Activated naive CD4-positive, alpha-beta T cell treated with anti-CD3 and anti-CD28 coated beads for 36 hours (primary cell): ENCODE measurements at regions of chr1 and their contacts with region 1.

Region 1: GRCh38 chr1:214123061-214123784 is 135.4 kb downstream of the PROX1 start:
- DNase-seq: peak; percentile 61
- H3K4me3 Mint-ChIP-seq: no peak overlapping the region
- H3K27ac Mint-ChIP-seq: no peak overlapping the region
- H3K4me1 Mint-ChIP-seq: peaks cover 6% of the 10 kb centered on the region
- H3K27me3 Mint-ChIP-seq: peaks cover 5% of the 10 kb centered on the region

Region 2: DNA sequence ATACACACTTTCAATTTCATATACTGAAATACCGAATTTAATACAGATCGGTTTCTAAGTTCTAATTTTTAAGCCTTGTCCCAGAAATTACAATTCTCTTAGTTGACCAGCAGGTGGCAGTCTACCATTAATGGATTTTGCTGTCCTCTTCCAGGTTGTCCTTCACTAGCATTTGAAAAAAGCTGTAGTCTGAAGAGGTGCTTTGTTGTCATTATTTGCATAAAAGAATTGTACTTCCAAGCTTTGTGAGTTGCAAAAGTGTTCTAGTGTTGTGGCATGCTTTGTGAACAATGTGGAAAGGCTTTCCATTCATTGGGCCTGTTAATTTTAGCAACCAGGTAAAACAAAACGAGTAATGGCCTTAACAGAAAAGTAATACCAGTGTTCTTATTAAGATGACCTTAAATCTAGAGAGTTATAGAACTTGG is 878.5 kb before region 1 on chr1:
- CTCF ChIA-PET with region 1: no interaction called
- intact Hi-C with region 1: loop called (anchors 1 kb)
- DNase-seq: peak; percentile 29
- H3K4me3 Mint-ChIP-seq: no peak overlapping the region
- H3K27ac Mint-ChIP-seq: no peak overlapping the region
- H3K4me1 Mint-ChIP-seq: no peaks in the 10 kb centered on the region
- H3K27me3 Mint-ChIP-seq: no peaks in the 10 kb centered on the region

Region 3: GRCh38 chr1:213374369-213374768 is 748.9 kb before region 1 on chr1:
- CTCF ChIA-PET with region 1: no interaction called
- intact Hi-C with region 1: loop called (anchors 1 kb)
- DNase-seq: peak; percentile 78
- H3K4me3 Mint-ChIP-seq: no peak overlapping the region
- H3K27ac Mint-ChIP-seq: no peak overlapping the region
- H3K4me1 Mint-ChIP-seq: no peaks in the 10 kb centered on the region
- H3K27me3 Mint-ChIP-seq: no peaks in the 10 kb centered on the region

Region 4: GRCh38 chr1:213669964-213670691 is 453.1 kb before region 1 on chr1:
- CTCF ChIA-PET with region 1: interaction called, 3 read pairs
- intact Hi-C with region 1: loop called (anchors 1 kb)
- DNase-seq: peak; percentile 49
- H3K4me3 Mint-ChIP-seq: no peak overlapping the region
- H3K27ac Mint-ChIP-seq: no peak overlapping the region
- H3K4me1 Mint-ChIP-seq: peaks cover 14% of the 10 kb centered on the region
- H3K27me3 Mint-ChIP-seq: no peaks in the 10 kb centered on the region

Region 5: DNA sequence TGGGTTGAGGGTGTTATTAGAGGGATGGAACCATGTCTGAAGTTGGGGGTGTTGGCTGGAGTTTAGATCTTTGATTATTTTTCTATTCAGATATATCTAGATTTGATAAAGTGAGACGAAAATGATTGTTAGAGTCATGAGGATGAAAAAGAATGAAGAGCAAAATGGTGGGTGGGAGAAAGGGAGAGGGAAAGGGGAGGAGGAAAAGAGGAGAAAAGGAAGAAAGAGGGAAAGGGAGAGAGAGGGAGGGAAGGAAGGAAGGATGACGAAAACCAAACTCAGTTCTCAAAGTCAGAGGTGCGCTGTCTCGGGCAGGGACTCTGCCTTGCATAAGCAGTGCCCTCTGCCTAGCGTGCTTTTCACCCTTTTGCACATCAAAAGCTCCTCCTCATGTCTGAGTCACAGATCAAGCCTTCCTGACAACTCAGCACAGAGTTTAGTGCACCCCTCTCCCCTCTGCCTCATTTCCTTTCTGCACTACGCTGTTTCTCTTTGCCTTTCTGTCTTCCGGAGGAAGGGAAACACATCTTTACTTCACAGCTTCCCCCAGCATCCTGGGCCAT is 361.3 kb before region 1 on chr1:
- CTCF ChIA-PET with region 1: no interaction called
- intact Hi-C with region 1: loop called (anchors 5 kb)
- DNase-seq: peak; percentile 81
- H3K4me3 Mint-ChIP-seq: peak overlapping the region; percentile 22
- H3K27ac Mint-ChIP-seq: peak overlapping the region; percentile 83
- H3K4me1 Mint-ChIP-seq: peaks cover 17% of the 10 kb centered on the region
- H3K27me3 Mint-ChIP-seq: no peaks in the 10 kb centered on the region

Region 6: GRCh38 chr1:213925531-213926182 is 197.6 kb before region 1 on chr1:
- CTCF ChIA-PET with region 1: no interaction called
- intact Hi-C with region 1: no loop called
- DNase-seq: no peak
- H3K4me3 Mint-ChIP-seq: no peak overlapping the region
- H3K27ac Mint-ChIP-seq: no peak overlapping the region
- H3K4me1 Mint-ChIP-seq: no peaks in the 10 kb centered on the region
- H3K27me3 Mint-ChIP-seq: no peaks in the 10 kb centered on the region